ENCODE measurements at regions of chr4 and their contacts with region 1.

Region 1: DNA sequence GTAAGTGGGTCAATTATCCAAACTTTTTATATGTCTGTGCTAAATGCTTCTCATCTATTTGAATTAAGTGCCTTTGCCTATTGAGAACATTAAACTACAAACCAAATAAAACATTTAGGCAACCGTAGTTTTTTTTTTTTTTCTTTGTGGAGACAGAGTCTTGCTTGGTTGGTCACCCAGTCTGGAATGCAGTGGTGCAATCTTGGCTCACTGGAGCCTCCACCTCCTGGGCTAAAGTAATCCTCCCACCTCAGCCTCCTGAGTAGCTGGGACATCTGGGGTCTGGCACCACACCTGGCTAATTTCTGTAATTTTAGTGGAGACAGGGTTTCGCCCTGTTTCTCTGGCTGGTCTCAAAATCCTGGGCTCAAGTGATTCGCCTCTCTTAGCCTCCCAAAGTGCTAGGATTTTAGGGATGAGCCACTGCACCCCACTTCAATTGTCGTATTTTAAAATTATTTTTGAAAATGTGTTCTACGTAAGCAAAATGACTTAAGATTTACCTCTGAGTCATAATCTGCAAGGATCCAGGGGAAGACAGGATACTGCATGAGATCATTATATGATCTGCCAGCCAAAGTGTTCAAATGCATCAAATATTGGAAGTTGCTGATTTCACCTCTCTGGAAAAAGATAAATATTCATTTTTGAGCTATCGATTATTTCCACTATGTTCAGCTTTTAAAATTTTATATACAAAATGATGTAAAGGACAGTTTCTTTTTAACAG is 125.6 kb downstream of the CDS1 start:
- DNase-seq: no peak
- H3K4me3 ChIP-seq: no peak overlapping the region
- H3K27ac ChIP-seq: no peak overlapping the region
- H3K4me1 ChIP-seq: no peaks in the 10 kb centered on the region
- H3K27me3 ChIP-seq: no peaks in the 10 kb centered on the region
- CTCF ChIP-seq: no peak
- EP300 ChIP-seq: no peak
- POLR2A ChIP-seq: no peak

Region 2: GRCh38 chr4:84535901-84536300 is 172.7 kb before region 1 on chr4:
- in situ Hi-C with region 1: no loop called
- intact Hi-C with region 1: no loop called
- DNase-seq: no peak
- H3K4me3 ChIP-seq: no peak overlapping the region
- H3K27ac ChIP-seq: no peak overlapping the region
- H3K4me1 ChIP-seq: no peaks in the 10 kb centered on the region
- H3K27me3 ChIP-seq: no peaks in the 10 kb centered on the region
- CTCF ChIP-seq: no peak
- EP300 ChIP-seq: no peak
- POLR2A ChIP-seq: no peak

Region 3: GRCh38 chr4:84651499-84651898 is 57.1 kb before region 1 on chr4:
- in situ Hi-C with region 1: no loop called
- intact Hi-C with region 1: no loop called
- DNase-seq: no peak
- H3K4me3 ChIP-seq: no peak overlapping the region
- H3K27ac ChIP-seq: no peak overlapping the region
- H3K4me1 ChIP-seq: peaks cover 6 to 27% (median 12%) of the 10 kb centered on the region in 4 donors
- H3K27me3 ChIP-seq: no peaks in the 10 kb centered on the region
- CTCF ChIP-seq: no peak
- EP300 ChIP-seq: no peak
- POLR2A ChIP-seq: no peak

Region 4: DNA sequence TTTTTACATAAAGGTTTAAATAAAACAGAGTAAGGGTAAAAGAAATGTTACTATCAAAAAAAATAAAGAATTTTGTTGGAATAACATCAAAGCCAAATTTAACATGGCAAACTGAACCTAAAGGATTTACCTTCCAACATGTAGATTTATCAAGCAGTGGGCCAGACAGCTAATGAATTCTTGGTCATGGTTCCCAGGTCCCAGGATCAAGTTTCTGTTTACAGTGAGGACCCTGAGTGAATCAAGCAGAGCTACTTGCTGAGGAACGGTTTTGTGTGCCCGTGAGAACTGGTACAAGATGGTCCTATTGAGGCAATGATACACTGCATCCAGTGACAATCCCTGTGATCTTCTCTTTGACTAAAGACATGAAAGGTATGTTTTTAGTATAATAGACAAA is 31.5 kb after region 1 on chr4:
- in situ Hi-C with region 1: no loop called
- intact Hi-C with region 1: loop called (anchors 2 kb)
- DNase-seq: no peak
- H3K4me3 ChIP-seq: no peak overlapping the region
- H3K27ac ChIP-seq: no peak overlapping the region
- H3K4me1 ChIP-seq: no peaks in the 10 kb centered on the region
- H3K27me3 ChIP-seq: no peaks in the 10 kb centered on the region
- CTCF ChIP-seq: no peak
- EP300 ChIP-seq: no peak
- POLR2A ChIP-seq: no peak

Measured in transverse colon (tissue), 4 donors.